ENCODE measurements at regions of chr1 and their contacts with region 1.

Region 1: GRCh38 chr1:9573723-9574122 is 15.0 kb upstream of the TMEM201 start:
- DNase-seq: no peak
- ATAC-seq: peak in 3 of 4 donors; percentile 61 to 75 (median 64)
- H3K4me3 ChIP-seq: no peak overlapping the region
- H3K27ac ChIP-seq: no peak overlapping the region
- H3K4me1 ChIP-seq: peaks cover 0 to 4% (median 0%) of the 10 kb centered on the region in 12 donors
- H3K27me3 ChIP-seq: no peaks in the 10 kb centered on the region
- CTCF ChIP-seq: peak; percentile 9 to 58 (median 46)
- POLR2A ChIP-seq: no peak

Region 2: GRCh38 chr1:9269078-9269501 is 304.6 kb before region 1 on chr1:
- intact Hi-C with region 1: loop called in 6 of 10 experiments (anchors 10 kb)
- DNase-seq: no peak
- ATAC-seq: peak in 2 of 4 donors; percentile 14 to 19
- H3K4me3 ChIP-seq: no peak overlapping the region
- H3K27ac ChIP-seq: no peak overlapping the region
- H3K4me1 ChIP-seq: peaks cover 0 to 36% (median 6%) of the 10 kb centered on the region in 12 donors
- H3K27me3 ChIP-seq: no peaks in the 10 kb centered on the region
- CTCF ChIP-seq: no peak
- POLR2A ChIP-seq: no peak

Region 3: GRCh38 chr1:9399510-9400424 is 174.0 kb before region 1 on chr1:
- intact Hi-C with region 1: no loop called
- DNase-seq: peak in 4 of 5 donors; percentile 47 to 82 (median 74)
- ATAC-seq: peak; percentile 54 to 77 (median 60)
- H3K4me3 ChIP-seq: no peak overlapping the region
- H3K27ac ChIP-seq: peak overlapping the region in 11 of 12 donors; percentile 39 to 86 (median 69)
- H3K4me1 ChIP-seq: peaks cover 0 to 41% (median 29%) of the 10 kb centered on the region in 12 donors
- H3K27me3 ChIP-seq: no peaks in the 10 kb centered on the region
- CTCF ChIP-seq: no peak
- POLR2A ChIP-seq: no peak

Region 4: GRCh38 chr1:9539165-9539828 is 34.4 kb before region 1 on chr1 and contains the start of gene SLC25A33:
- intact Hi-C with region 1: loop called in 1 of 10 experiments (anchors 5 kb)
- DNase-seq: peak; percentile 97 to 99 (median 97)
- ATAC-seq: peak; percentile 99 to 100 (median 100)
- H3K4me3 ChIP-seq: peak within 1 kb of the TSS; percentile 70 to 94 (median 80)
- H3K27ac ChIP-seq: peak within 1 kb of the TSS; percentile 43 to 95 (median 86)
- H3K4me1 ChIP-seq: peaks cover 0 to 37% (median 22%) of the 10 kb centered on the region in 12 donors
- H3K27me3 ChIP-seq: no peaks in the 10 kb centered on the region
- CTCF ChIP-seq: peak in 3 of 12 donors; percentile 7 to 19 (median 9)
- POLR2A ChIP-seq: peak; percentile 82 to 84
- total RNA-seq, gene SLC25A33: 2.8 to 9.7 (median 4.5) TPM